A673 (cell line): ENCODE measurements at regions of chr4 and their contacts with region 1.

Region 1: DNA sequence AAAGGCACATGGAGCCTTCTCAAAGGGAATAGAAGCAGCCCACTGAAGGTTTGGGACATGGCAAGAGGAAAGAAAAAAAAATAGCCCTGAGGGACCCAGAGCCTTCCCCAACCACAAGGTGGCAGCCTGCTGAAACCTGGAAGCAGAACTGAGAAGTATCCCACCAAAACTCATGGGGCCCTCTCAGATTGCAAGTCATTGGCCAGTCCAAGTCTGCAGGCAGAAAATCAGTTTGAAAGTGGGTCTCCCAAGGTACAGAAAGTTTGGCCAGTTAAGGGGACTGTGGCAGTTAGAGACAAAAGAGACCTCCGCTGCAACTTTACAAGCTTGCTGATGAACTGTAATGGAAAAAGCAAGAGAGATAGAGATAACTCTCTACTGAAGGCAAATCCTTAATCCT is 155.8 kb downstream of the ANTXR2 start:
- DNase-seq: peak; percentile 58
- H3K4me3 ChIP-seq: no peak overlapping the region
- H3K27ac ChIP-seq: no peak overlapping the region
- H3K4me1 ChIP-seq: no peaks in the 10 kb centered on the region
- H3K27me3 ChIP-seq: no peaks in the 10 kb centered on the region
- CTCF ChIP-seq: peak; percentile 63

Region 2: GRCh38 chr4:80007745-80008149 is 90.5 kb after region 1 on chr4:
- CTCF ChIA-PET with region 1: no interaction called
- POLR2A ChIA-PET with region 1: no interaction called
- intact Hi-C with region 1: no loop called
- DNase-seq: peak; percentile 30
- H3K4me3 ChIP-seq: no peak overlapping the region
- H3K27ac ChIP-seq: peak overlapping the region; percentile 77
- H3K4me1 ChIP-seq: peaks cover 18% of the 10 kb centered on the region
- H3K27me3 ChIP-seq: no peaks in the 10 kb centered on the region
- CTCF ChIP-seq: no peak

Region 3: DNA sequence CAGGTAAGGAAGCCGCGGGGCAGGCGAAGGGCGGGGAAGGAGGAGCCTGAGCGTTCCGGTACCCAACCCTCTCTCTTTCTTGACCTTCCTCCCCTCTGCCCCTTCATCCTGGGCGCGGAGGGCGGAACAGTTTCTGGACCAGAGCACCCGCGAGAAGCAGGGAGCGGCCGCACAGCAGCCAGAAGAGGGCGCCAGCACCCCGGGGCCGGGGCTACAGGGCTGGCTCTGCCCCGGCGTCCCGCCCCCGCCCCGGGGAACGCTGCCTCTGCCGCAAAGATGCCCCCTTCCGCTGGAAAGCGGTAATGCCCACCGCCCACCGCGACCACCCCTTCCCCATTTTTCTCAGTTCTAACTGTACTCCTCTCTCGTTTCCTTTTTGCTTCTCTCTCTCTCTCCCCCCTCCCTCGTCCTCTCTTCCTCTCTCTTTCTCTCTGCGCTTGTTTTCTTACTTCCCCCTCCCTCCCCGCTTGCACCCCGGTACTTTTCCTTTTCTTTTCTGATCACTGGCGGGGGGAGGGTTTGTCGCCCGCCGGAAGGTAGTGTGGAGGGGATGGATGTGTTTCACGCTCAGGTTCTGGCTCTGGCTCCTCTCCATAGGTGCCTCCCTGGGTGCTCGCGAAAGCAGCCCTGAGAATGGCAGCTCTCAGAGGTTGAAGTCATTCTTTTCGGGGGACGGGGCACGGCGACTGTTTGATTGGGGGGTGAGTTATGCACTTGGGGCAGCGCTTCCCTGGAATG is 267.0 kb after region 1 on chr4:
- CTCF ChIA-PET with region 1: no interaction called
- POLR2A ChIA-PET with region 1: no interaction called
- intact Hi-C with region 1: loop called (anchors 10 kb)
- DNase-seq: peak; percentile 63
- H3K4me3 ChIP-seq: peak overlapping the region; percentile 49
- H3K27ac ChIP-seq: no peak overlapping the region
- H3K4me1 ChIP-seq: peaks cover 4% of the 10 kb centered on the region
- H3K27me3 ChIP-seq: peaks cover 43% of the 10 kb centered on the region
- CTCF ChIP-seq: peak; percentile 68